Activated T-helper 1 cell treated with anti-CD3 and anti-CD28 coated beads, Interleukin-12 subunit alpha, Interleukin-12 subunit beta, Interleukin-2, Interleukin-4 antibody, amounts not matched to agents 30 ng/mL and 10 ng/mL and 1 ng/mL, durations not matched to agents 14 hours and 24 hours and 36 hours (primary cell): ENCODE measurements at regions of chr9 and their contacts with region 1.

Region 1: DNA sequence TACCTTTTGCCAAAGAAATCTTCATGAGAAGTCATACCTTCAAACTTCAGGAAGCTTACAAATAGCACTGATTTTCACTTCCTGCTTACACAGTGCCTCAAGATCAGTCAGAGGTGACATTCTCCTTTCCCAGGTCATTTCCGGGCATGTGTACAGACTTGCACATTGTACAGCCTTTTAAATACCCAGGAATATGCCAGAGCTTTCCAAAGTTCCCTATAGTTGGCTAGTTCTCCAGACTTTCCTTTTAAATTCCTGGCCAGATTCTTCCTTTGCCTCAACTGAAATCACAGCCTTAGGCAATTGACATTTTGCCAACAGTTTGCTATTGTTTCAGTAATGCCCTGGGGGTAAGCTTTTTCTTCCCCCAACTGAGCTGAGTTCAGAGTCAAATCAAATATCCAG is 47.2 kb downstream of the RFX3 start:
- DNase-seq: no peak
- H3K4me3 Mint-ChIP-seq: peak overlapping the region; percentile 35
- H3K27ac Mint-ChIP-seq: peak overlapping the region; percentile 82
- H3K4me1 Mint-ChIP-seq: peaks cover 77% of the 10 kb centered on the region
- H3K27me3 Mint-ChIP-seq: no peaks in the 10 kb centered on the region

Region 2: GRCh38 chr9:3508521-3509291 is 30.2 kb after region 1 on chr9:
- intact Hi-C with region 1: loop called (anchors 2 kb)
- DNase-seq: no peak
- H3K4me3 Mint-ChIP-seq: no peak overlapping the region
- H3K27ac Mint-ChIP-seq: no peak overlapping the region
- H3K4me1 Mint-ChIP-seq: peaks cover 34% of the 10 kb centered on the region
- H3K27me3 Mint-ChIP-seq: no peaks in the 10 kb centered on the region